Activated CD8-positive, alpha-beta T cell treated with anti-CD3 and anti-CD28 coated beads for 36 hours (primary cell): ENCODE measurements at regions of chr20 and their contacts with region 1.

Region 1: DNA sequence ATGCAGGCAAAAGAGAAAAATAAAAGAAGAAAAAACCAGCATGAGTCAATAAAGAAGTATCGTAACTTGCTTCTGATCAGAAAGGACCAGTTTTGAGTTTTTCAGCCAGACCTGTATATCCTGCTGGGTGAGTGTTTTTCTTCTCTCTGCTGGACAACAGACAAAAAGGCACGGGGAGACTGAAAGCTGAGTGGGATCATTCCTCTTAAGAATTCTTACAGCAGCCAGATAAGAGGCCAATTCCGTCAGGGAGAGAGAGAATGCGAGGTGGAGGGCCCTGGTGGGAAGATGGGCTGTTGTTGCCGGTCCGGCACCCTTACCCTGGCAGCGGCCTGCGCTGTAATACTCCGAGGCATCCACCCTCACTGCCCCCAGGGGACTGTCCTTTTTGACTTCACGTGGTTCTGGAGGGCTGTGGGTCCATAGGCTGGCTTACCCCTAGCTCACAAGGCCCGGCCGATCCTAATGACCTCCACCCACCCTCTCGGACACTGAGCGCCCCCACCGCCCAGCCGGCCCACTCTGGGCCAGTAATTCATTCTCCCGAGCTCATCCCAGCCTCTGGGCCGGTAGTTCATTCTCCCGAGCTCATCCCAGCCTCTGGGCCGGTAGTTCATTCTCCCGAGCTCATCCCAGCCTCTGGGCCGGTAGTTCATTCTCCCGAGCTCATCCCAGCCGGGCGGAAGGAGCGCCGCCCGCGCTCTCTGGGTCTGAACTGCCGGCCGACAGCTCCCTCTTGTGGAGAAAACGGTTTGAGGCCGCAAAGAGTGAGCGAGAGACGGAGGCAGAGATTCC is 118.3 kb upstream of the SIRPA start:
- DNase-seq: peak; percentile 86
- ATAC-seq: peak; percentile 86
- H3K4me3 Mint-ChIP-seq: peak overlapping the region; percentile 84
- H3K27ac Mint-ChIP-seq: peak overlapping the region; percentile 44
- H3K4me1 Mint-ChIP-seq: peaks cover 13% of the 10 kb centered on the region
- H3K27me3 Mint-ChIP-seq: peaks cover 6% of the 10 kb centered on the region
- CTCF ChIP-seq: peak; percentile 89

Region 2: GRCh38 chr20:1491281-1491840 is 285.5 kb before region 1 on chr20 and contains the start of gene SIRPB2:
- CTCF ChIA-PET with region 1: interaction called, 11 read pairs
- POLR2A ChIA-PET with region 1: interaction called, 3 read pairs
- intact Hi-C with region 1: no loop called
- DNase-seq: no peak
- ATAC-seq: no peak
- H3K4me3 Mint-ChIP-seq: no peak within 1 kb of the TSS
- H3K27ac Mint-ChIP-seq: no peak within 1 kb of the TSS
- H3K4me1 Mint-ChIP-seq: peaks cover 12% of the 10 kb centered on the region
- H3K27me3 Mint-ChIP-seq: peaks cover 20% of the 10 kb centered on the region
- CTCF ChIP-seq: no peak
- total RNA-seq, gene SIRPB2: not detected

Region 3: GRCh38 chr20:1524004-1524403 is 252.9 kb before region 1 on chr20:
- CTCF ChIA-PET with region 1: interaction called, 15 read pairs
- POLR2A ChIA-PET with region 1: no interaction called
- intact Hi-C with region 1: no loop called
- DNase-seq: no peak
- ATAC-seq: no peak
- H3K4me3 Mint-ChIP-seq: no peak overlapping the region
- H3K27ac Mint-ChIP-seq: no peak overlapping the region
- H3K4me1 Mint-ChIP-seq: peaks cover 2% of the 10 kb centered on the region
- H3K27me3 Mint-ChIP-seq: peaks cover 4% of the 10 kb centered on the region
- CTCF ChIP-seq: no peak

Region 4: DNA sequence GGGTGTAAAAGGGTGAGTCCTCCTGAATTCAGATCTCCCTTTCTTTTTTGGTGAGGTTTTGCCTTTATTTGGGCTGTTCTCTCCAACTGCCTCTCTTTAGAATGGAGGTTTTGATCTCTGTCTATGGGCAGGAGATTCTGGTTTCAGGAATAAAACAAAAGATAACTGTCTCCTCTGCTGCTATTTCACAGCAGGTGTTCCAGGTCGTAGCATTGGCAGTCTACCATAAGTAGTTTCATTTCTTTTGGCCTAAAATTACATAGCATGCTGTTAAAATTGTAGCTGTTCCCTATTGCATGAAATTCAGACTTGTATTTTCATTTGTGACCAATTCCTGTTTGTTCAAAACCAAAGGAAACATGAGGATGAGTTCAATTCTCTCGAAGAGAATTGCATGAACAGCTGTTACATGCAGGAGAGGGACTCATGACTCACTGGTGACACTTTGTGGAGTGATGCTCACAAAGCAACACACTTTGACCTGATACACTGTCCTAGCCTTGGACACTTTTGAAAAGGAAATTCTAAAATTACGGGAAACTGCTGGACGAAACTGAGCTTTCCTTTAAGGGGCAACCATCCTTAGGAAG is 42.5 kb before region 1 on chr20:
- CTCF ChIA-PET with region 1: interaction called, 15 read pairs
- POLR2A ChIA-PET with region 1: no interaction called
- intact Hi-C with region 1: no loop called
- DNase-seq: peak; percentile 41
- ATAC-seq: peak; percentile 88
- H3K4me3 Mint-ChIP-seq: no peak overlapping the region
- H3K27ac Mint-ChIP-seq: no peak overlapping the region
- H3K4me1 Mint-ChIP-seq: peaks cover 40% of the 10 kb centered on the region
- H3K27me3 Mint-ChIP-seq: no peaks in the 10 kb centered on the region
- CTCF ChIP-seq: peak; percentile 45

Region 5: GRCh38 chr20:1764136-1765033 is 12.5 kb before region 1 on chr20:
- CTCF ChIA-PET with region 1: interaction called, 99 read pairs
- POLR2A ChIA-PET with region 1: no interaction called
- intact Hi-C with region 1: no loop called
- DNase-seq: peak; percentile 84
- ATAC-seq: peak; percentile 94
- H3K4me3 Mint-ChIP-seq: no peak overlapping the region
- H3K27ac Mint-ChIP-seq: no peak overlapping the region
- H3K4me1 Mint-ChIP-seq: no peaks in the 10 kb centered on the region
- H3K27me3 Mint-ChIP-seq: no peaks in the 10 kb centered on the region
- CTCF ChIP-seq: peak; percentile 88

Region 6: GRCh38 chr20:2010533-2010932 is 233.7 kb after region 1 on chr20:
- CTCF ChIA-PET with region 1: no interaction called
- POLR2A ChIA-PET with region 1: no interaction called
- intact Hi-C with region 1: no loop called
- DNase-seq: no peak
- ATAC-seq: no peak
- H3K4me3 Mint-ChIP-seq: no peak overlapping the region
- H3K27ac Mint-ChIP-seq: no peak overlapping the region
- H3K4me1 Mint-ChIP-seq: no peaks in the 10 kb centered on the region
- H3K27me3 Mint-ChIP-seq: peaks cover 32% of the 10 kb centered on the region
- CTCF ChIP-seq: no peak